Activated CD4-positive, alpha-beta T cell treated with anti-CD3 and anti-CD28 coated beads for 36 hours (primary cell): ENCODE measurements at regions of chr2 and their contacts with region 1.

Region 1: DNA sequence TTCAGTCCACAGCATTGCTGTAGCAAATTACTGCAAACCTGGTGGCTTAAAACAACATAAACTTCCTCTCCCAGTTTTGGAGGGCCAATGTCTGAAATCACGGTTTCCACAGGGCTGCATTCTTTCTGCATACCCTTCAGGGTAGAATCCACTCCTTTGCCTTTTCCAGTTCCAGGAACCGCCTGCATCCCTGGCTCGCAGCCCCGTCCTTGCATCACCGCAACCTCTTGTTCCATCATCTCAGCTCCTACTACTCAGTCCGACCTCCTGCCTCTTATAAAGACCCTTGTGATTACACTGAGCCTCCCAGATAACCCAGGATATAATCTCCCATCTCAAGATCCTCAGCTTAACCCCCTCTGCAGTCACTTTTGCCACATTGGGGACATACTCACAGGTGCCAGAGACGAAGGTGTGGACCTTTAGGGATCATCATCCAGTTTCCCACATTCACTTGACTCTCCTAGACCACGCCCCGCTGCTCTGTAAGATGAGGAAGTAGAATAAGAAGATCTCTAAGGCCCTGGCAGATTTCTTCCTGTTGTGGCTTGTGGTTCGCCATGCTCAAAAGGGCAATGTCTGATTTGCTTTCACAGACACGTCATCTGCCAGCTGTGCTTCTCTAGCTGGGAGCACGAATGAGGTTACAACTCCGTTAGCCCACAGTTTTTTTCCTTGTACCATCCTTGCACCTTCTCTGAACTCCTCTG is 103.6 kb upstream of the AGAP1 start:
- DNase-seq: peak; percentile 82
- ATAC-seq: peak; percentile 96
- H3K4me3 Mint-ChIP-seq: no peak overlapping the region
- H3K27ac Mint-ChIP-seq: no peak overlapping the region
- H3K4me1 Mint-ChIP-seq: peaks cover 15% of the 10 kb centered on the region
- H3K27me3 Mint-ChIP-seq: peaks cover 5% of the 10 kb centered on the region

Region 2: DNA sequence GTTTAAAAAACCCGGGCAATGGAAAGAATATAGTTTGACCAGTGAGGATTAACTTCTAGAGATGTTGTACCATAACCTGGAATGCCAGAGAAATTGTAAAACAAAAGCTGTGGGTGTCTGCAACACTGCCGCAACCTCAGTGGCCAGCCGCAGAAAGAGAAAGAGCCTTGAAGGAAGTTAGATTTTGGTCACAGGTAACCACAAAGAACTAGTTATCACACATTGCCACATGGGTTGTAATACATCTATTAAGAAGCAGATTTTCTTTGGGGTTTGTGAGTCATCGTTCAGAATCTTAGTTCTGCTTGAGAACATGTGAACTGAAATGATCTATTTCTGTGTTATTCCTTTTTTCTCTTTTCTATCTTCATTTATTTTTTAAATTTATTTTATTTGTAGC is 119.3 kb before region 1 on chr2:
- CTCF ChIA-PET with region 1: no interaction called
- POLR2A ChIA-PET with region 1: no interaction called
- intact Hi-C with region 1: loop called in 1 of 2 experiments (anchors 5 kb)
- DNase-seq: peak; percentile 82
- ATAC-seq: peak; percentile 90
- H3K4me3 Mint-ChIP-seq: no peak overlapping the region
- H3K27ac Mint-ChIP-seq: no peak overlapping the region
- H3K4me1 Mint-ChIP-seq: peaks cover 9% of the 10 kb centered on the region
- H3K27me3 Mint-ChIP-seq: peaks cover 69% of the 10 kb centered on the region

Region 3: GRCh38 chr2:235685024-235685721 is 294.9 kb after region 1 on chr2:
- CTCF ChIA-PET with region 1: no interaction called
- POLR2A ChIA-PET with region 1: no interaction called
- intact Hi-C with region 1: no loop called
- DNase-seq: no peak
- ATAC-seq: no peak
- H3K4me3 Mint-ChIP-seq: no peak overlapping the region
- H3K27ac Mint-ChIP-seq: no peak overlapping the region
- H3K4me1 Mint-ChIP-seq: no peaks in the 10 kb centered on the region
- H3K27me3 Mint-ChIP-seq: peaks cover 9% of the 10 kb centered on the region